CD8-positive, alpha-beta memory T cell (primary cell): ENCODE measurements at regions of chr12 and their contacts with region 1.

Region 1: DNA sequence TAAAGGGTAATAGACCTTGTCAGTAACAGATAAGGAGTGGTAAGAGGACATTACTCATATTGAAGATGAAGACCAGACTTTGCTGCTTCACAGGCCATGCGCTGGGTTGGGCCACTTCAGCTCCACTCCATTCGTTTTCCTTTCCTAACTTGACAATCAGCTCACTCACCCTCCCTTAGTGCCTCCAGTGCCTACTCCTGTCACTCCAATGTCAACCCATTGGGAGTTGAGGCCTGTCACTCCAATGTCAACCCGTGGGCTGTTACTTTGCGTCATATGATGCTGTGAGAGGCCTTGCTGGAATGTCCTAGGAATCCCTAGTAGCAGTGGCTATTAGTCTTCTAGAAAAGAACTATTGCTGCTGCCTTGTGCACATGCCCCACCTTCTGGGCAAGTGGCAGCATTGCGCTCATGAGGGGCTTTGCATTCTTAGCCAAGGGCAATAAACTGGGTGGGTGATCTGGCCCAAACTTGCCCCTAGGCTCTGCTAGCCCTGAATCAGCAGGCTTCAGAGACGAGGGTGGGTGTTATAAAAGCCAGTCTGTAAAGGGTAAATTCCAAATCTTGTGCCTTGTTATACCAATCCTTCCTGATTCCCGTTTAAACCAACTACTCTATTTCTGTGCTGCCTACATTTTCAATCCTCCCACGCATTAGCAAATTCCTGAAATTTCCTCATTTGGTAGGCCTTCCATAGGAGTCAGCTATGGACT is 36.1 kb downstream of the BAZ2A start:
- DNase-seq: peak; percentile 37 to 69 (median 51)
- H3K4me3 ChIP-seq: no peak overlapping the region
- H3K4me3 Mint-ChIP-seq: no peak overlapping the region
- H3K27ac ChIP-seq: no peak overlapping the region
- H3K27ac Mint-ChIP-seq: peak overlapping the region in 5 of 8 donors; percentile 1 to 90 (median 44)
- H3K4me1 ChIP-seq: no peaks in the 10 kb centered on the region
- H3K4me1 Mint-ChIP-seq: peaks cover 0 to 3% (median 2%) of the 10 kb centered on the region in 3 donors
- H3K27me3 ChIP-seq: no peaks in the 10 kb centered on the region
- H3K27me3 Mint-ChIP-seq: no peaks in the 10 kb centered on the region

Region 2: DNA sequence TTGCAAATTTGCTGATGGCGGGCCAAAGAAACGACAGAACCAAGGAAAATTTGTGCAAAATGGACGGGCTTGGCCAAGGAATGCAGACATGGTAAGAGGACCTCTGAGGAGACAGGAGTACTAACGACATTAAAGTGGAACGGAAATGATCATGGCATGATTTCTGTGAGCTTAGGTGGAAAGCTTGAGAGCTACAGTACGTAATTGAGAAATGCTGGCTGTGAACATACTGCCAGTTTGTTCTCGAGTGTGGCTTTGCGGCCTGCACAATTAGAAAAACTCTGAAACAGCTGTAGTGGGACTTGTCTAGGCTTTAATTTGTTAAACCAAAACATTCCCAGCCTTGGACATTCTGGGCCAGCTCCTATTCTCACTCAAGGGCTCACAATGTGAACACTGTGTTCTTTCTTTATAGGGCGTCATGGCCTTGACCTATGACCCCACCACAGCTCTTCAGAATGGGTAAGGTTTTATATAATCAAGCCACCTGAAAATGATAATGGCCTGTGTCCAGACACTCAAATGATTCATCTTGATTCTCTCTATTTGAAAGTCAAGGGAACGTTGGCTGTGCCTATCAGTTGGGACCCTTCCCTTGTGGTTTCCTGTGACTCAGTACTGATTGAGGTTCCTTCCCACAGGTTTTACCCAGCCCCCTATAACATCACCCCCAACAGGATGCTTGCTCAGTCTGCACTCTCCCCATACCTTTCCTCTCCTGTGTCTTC is 12.5 kb before region 1 on chr12:
- CTCF ChIA-PET with region 1: interaction called, 12 read pairs
- POLR2A ChIA-PET with region 1: no interaction called
- DNase-seq: peak in 4 of 5 donors; percentile 10 to 62 (median 38)
- H3K4me3 ChIP-seq: no peak overlapping the region
- H3K4me3 Mint-ChIP-seq: peak overlapping the region in 6 of 7 donors; percentile 8 to 41 (median 32)
- H3K27ac ChIP-seq: no peak overlapping the region
- H3K27ac Mint-ChIP-seq: peak overlapping the region; percentile 31 to 97 (median 86)
- H3K4me1 ChIP-seq: peaks cover 18% of the 10 kb centered on the region
- H3K4me1 Mint-ChIP-seq: peaks cover 17 to 26% (median 18%) of the 10 kb centered on the region in 3 donors
- H3K27me3 ChIP-seq: no peaks in the 10 kb centered on the region
- H3K27me3 Mint-ChIP-seq: no peaks in the 10 kb centered on the region

Region 3: DNA sequence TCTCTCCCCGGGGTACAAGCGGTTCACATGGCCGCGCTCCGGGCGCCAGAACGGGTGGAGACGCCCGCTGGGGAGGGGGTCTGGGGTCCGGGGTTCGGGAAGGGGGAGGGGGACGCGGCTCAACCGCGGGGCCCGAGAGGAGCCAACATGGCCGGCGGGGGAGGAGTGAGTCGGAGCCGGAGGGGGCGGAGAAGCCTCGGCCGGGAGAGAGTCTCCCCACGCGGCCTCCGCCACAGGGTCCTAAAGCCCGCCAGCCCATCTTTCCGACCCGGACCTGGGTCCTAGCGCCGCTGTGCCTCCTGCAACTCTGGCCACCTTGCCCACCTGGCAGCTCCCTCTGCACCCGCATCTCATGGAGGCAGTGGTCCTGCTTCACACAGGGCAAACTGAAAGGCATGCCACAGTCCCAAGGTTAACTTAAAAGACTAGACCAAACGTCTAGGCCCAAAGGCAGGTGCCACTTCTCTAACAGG is 36.1 kb after region 1 on chr12 and contains the start of gene BAZ2A:
- CTCF ChIA-PET with region 1: interaction called, 10 read pairs
- POLR2A ChIA-PET with region 1: interaction called, 3 read pairs
- DNase-seq: peak; percentile 71 to 86 (median 80)
- H3K4me3 ChIP-seq: peak within 1 kb of the TSS; percentile 89
- H3K4me3 Mint-ChIP-seq: peak within 1 kb of the TSS; percentile 82 to 94 (median 91)
- H3K27ac ChIP-seq: peak within 1 kb of the TSS; percentile 80
- H3K27ac Mint-ChIP-seq: peak within 1 kb of the TSS; percentile 92 to 98 (median 95)
- H3K4me1 ChIP-seq: peaks cover 67% of the 10 kb centered on the region
- H3K4me1 Mint-ChIP-seq: peaks cover 72 to 76% (median 75%) of the 10 kb centered on the region in 3 donors
- H3K27me3 ChIP-seq: no peaks in the 10 kb centered on the region
- H3K27me3 Mint-ChIP-seq: peaks cover 0 to 2% of the 10 kb centered on the region in 2 donors
- total RNA-seq, gene BAZ2A: 87.3 to 89.1 TPM

Region 4: GRCh38 chr12:56833776-56834175 is 239.7 kb after region 1 on chr12:
- CTCF ChIA-PET with region 1: no interaction called
- POLR2A ChIA-PET with region 1: no interaction called
- DNase-seq: no peak
- H3K4me3 ChIP-seq: no peak overlapping the region
- H3K4me3 Mint-ChIP-seq: no peak overlapping the region
- H3K27ac ChIP-seq: no peak overlapping the region
- H3K27ac Mint-ChIP-seq: no peak overlapping the region
- H3K4me1 ChIP-seq: peaks cover 14% of the 10 kb centered on the region
- H3K4me1 Mint-ChIP-seq: peaks cover 15 to 17% (median 16%) of the 10 kb centered on the region in 3 donors
- H3K27me3 ChIP-seq: no peaks in the 10 kb centered on the region
- H3K27me3 Mint-ChIP-seq: peaks cover 8 to 9% of the 10 kb centered on the region in 2 donors